IMR-90 (cell line): ENCODE measurements at regions of chr20 and their contacts with region 1.

Region 1: DNA sequence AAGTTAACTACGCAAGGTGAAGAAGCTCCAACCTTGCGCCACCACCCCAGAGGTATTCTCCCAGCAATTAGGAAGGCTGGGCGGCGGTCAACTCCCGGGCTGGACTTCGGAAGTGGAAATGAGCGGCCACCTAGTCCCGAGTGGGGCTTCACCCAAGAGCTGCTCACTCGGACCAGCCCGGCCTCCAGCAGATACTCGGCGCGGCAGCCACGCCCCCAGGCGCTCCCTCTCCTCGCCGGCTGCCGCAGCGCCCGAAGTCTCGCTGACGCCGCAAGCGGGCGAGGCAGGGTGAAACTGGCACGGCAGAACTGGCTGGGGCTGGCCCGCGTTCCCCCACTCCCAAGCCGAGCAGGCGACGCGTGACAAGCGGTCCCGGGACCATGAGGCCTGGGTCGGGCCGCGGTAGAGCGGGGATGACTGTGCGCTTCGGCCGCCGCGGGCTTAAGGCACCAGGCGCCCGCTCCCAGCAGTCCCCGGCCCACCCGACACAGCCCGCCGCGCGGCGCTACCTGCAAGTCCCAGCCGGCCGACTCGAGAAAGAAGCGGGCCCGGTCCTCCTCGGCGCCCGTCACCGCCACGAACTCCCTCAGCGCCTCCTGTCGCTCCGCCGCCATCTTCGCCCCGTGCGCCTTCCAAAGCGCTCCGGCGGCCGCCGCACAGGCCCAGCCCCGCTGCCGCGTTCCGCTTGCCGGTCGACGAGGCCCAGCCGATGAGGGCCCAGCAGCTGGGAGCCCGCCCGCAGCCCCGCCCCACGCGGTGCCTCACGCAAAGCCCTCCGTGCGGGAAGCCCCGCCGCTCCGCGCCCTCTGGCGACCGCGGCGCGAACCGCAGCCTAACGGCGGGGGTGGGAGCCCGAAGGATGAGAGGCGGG is at the start of gene NSFL1C:
- DNase-seq: peak; percentile 93
- ATAC-seq: peak; percentile 89
- H3K4me3 ChIP-seq: peak within 1 kb of the TSS; percentile 96
- H3K27ac ChIP-seq: peak within 1 kb of the TSS; percentile 74
- H3K4me1 ChIP-seq: peaks cover 12% of the 10 kb centered on the region
- H3K27me3 ChIP-seq: peaks cover 2% of the 10 kb centered on the region; the same call in 1 of the 2 replicates
- CTCF ChIP-seq: peak; percentile 97
- POLR2A ChIP-seq: peak; percentile 85
- RAD21 ChIP-seq: peak; percentile 45
- total RNA-seq, gene NSFL1C: 40.3 and 41.1 TPM in 2 replicates

Region 2: DNA sequence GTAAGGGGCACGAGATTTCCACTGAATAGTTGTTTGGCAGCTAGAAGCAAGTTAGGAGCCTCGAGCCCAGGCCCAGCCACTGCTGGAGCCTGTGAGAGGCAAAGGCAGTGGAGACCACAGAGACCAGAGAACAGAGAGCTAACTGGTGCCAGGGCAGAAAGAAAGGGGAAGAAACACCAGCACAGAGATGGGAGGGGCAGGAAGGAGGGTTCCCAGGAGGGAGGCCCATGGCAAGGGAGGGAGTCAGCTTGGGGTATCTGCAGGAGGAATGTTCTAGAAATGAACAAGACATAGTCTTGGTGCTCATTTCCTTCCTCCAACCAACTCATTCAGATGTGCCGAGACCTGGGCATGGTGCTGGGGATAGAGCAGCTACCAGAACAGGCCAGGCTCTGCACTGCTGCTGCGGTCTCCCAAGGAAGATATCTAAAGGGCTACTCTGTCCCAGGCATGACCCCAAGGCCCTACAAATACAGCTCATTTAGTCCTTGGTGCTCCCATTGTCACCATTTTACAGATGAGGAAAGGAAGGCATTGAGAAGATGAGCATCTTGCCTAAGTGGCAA is 561.0 kb before region 1 on chr20:
- CTCF ChIA-PET with region 1: no interaction called
- POLR2A ChIA-PET with region 1: no interaction called
- dilution Hi-C with region 1: no loop called
- in situ Hi-C with region 1: no loop called
- intact Hi-C with region 1: no loop called
- DNase-seq: no peak
- ATAC-seq: no peak
- H3K4me3 ChIP-seq: no peak overlapping the region
- H3K27ac ChIP-seq: no peak overlapping the region
- H3K4me1 ChIP-seq: peaks cover 3% of the 10 kb centered on the region; the same call in 1 of the 2 replicates
- H3K27me3 ChIP-seq: no peaks in the 10 kb centered on the region
- CTCF ChIP-seq: no peak
- POLR2A ChIP-seq: no peak
- RAD21 ChIP-seq: no peak

Region 3: GRCh38 chr20:1118336-1119127 is 347.9 kb before region 1 on chr20 and contains the start of gene PSMF1:
- CTCF ChIA-PET with region 1: no interaction called
- POLR2A ChIA-PET with region 1: no interaction called
- dilution Hi-C with region 1: no loop called
- in situ Hi-C with region 1: no loop called
- intact Hi-C with region 1: loop called (anchors 1 kb)
- DNase-seq: peak; percentile 86
- ATAC-seq: peak; percentile 96
- H3K4me3 ChIP-seq: peak within 1 kb of the TSS; percentile 96
- H3K27ac ChIP-seq: peak within 1 kb of the TSS; percentile 63
- H3K4me1 ChIP-seq: peaks cover 14% of the 10 kb centered on the region
- H3K27me3 ChIP-seq: no peaks in the 10 kb centered on the region
- CTCF ChIP-seq: no peak
- POLR2A ChIP-seq: peak; percentile 56
- RAD21 ChIP-seq: no peak
- total RNA-seq, gene PSMF1: 93.6 and 120 TPM in 2 replicates

Region 4: GRCh38 chr20:1313236-1313964 is 153.0 kb before region 1 on chr20:
- CTCF ChIA-PET with region 1: no interaction called
- POLR2A ChIA-PET with region 1: no interaction called
- dilution Hi-C with region 1: no loop called
- in situ Hi-C with region 1: no loop called
- intact Hi-C with region 1: loop called (anchors 1 kb)
- DNase-seq: peak; percentile 71
- ATAC-seq: peak; percentile 95
- H3K4me3 ChIP-seq: peak overlapping the region; percentile 13; the same call in 1 of the 2 replicates
- H3K27ac ChIP-seq: peak overlapping the region; percentile 20; the same call in 1 of the 2 replicates
- H3K4me1 ChIP-seq: no peaks in the 10 kb centered on the region
- H3K27me3 ChIP-seq: no peaks in the 10 kb centered on the region
- CTCF ChIP-seq: peak; percentile 95
- POLR2A ChIP-seq: no peak
- RAD21 ChIP-seq: peak; percentile 93

Region 5: DNA sequence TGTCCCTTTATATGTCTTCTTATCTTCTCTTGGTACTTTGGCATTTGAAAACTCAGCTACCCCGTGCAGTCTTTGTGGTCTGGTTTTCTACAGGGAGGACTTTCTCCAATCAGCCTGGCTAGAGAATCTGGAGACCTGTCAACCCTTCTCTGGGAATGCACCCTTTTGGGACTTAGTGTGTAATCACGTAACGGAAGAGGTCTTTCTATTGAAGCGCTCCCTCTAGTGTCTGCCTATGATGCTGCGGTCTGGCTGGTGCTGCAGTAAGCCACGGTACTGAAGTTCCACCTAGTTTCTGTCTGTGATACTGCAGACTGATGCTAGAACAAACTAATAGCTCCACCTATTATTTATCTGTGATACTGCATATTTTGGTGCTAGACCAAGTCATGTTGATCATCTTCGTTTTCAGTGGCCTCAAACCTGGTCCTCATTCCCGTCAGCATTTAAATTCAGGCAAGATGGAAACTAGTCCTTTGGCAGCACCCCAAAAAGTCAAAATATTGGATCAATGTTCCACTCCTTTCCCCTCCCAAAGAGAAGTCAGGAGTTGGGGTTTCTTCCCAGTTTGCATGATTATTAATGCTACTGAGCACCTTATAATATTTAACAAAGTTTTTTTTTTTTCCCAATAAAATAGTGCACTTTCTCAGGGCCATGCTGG is 37.2 kb after region 1 on chr20:
- CTCF ChIA-PET with region 1: interaction called, 11 read pairs
- POLR2A ChIA-PET with region 1: no interaction called
- dilution Hi-C with region 1: no loop called
- in situ Hi-C with region 1: no loop called
- intact Hi-C with region 1: loop called (anchors 1 kb)
- DNase-seq: peak; percentile 92
- ATAC-seq: peak; percentile 100
- H3K4me3 ChIP-seq: no peak overlapping the region
- H3K27ac ChIP-seq: no peak overlapping the region
- H3K4me1 ChIP-seq: no peaks in the 10 kb centered on the region
- H3K27me3 ChIP-seq: peaks cover 10% of the 10 kb centered on the region
- CTCF ChIP-seq: peak; percentile 100
- POLR2A ChIP-seq: 0 out of 2 replicates have a peak, but pooled peaks have one; percentile 27
- RAD21 ChIP-seq: peak; percentile 98